Activated CD8-positive, alpha-beta memory T cell treated with anti-CD3 and anti-CD28 coated beads, Interleukin-2, amount 10 ng/mL, durations not matched to agents 7 days and 5 days (primary cell): ENCODE measurements at regions of chr11 and their contacts with region 1.

Region 1: DNA sequence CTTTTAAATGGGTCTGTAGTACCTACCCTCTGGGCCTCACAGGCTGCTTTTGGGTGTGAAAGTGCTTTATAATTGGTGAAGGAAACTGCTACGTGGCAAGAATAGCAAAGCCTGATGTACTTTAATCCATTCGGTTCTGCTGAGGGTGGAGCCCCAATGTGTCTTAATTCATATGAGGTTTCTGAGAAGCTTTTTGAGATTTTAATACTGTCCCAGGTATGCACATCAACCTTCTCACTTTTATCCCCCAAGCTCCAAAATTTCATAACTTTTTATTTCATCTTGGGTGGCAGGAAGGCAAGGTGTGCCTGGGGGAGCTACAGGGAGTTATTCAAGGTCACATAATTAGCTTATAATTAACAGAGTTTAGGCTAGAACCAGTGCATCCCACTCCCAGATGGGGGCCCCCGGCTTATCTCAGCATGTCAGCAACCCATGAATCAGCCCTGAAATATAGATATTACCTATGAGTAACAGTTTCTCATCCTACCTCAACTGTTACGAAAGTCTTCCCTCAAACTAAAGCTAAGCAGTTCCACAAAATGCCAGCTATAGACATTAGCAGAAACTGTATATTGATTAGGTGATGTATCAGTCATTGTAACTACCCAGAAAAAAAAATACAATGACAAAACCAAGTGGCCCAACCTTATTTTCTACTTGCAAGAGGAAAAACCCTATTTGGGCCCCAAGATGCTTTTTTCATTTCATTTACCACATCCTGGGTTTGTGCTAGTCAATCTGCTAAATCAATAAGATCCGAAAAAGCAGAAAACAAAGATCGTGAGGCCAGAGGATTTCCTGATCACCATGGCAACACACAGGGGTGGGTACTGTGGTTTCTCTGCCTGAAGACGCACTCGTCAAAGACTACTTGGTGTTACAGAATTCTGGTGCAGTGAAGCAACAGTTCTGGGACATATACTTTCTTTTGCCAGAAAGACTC is 26.7 kb downstream of the CD44 start:
- DNase-seq: peak; percentile 97
- ATAC-seq: peak; percentile 77
- H3K4me3 Mint-ChIP-seq: peak overlapping the region; percentile 44
- H3K27ac Mint-ChIP-seq: peak overlapping the region; percentile 99
- H3K4me1 Mint-ChIP-seq: peaks cover 95% of the 10 kb centered on the region
- H3K27me3 Mint-ChIP-seq: no peaks in the 10 kb centered on the region

Region 2: GRCh38 chr11:34830648-34831047 is 335.0 kb before region 1 on chr11:
- CTCF ChIA-PET with region 1: no interaction called
- DNase-seq: no peak
- ATAC-seq: no peak
- H3K4me3 Mint-ChIP-seq: no peak overlapping the region
- H3K27ac Mint-ChIP-seq: no peak overlapping the region
- H3K4me1 Mint-ChIP-seq: no peaks in the 10 kb centered on the region
- H3K27me3 Mint-ChIP-seq: peaks cover 14% of the 10 kb centered on the region

Region 3: GRCh38 chr11:34840736-34841386 is 324.8 kb before region 1 on chr11:
- CTCF ChIA-PET with region 1: no interaction called
- DNase-seq: no peak
- ATAC-seq: no peak
- H3K4me3 Mint-ChIP-seq: no peak overlapping the region
- H3K27ac Mint-ChIP-seq: no peak overlapping the region
- H3K4me1 Mint-ChIP-seq: no peaks in the 10 kb centered on the region
- H3K27me3 Mint-ChIP-seq: peaks cover 26% of the 10 kb centered on the region

Region 4: DNA sequence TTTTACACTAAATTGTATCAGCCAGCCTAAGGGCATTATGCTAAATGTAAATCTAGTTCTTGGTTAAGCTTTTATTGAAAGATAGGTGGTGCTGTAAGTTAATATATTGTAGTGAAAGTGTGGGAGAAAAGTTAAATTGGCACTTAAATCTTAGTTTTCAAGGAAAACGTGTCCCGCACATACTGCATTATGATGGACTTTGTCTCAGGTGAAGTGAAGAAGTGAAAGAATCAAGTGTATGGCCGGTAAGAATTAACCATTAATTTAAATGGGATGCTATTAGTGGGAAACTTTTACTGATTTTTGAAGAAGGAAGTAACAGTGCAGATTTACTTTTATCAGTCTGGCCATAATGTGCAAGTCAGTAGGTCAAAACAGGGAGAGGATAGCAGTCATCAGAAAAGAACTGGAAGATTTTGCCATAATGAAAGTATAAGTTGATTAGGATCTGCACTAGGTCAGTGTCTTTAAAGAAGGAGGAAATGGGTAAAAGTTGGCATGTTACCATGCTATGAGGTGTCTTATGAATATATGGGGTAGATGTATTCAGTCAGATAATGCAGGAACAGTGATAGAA is 167.7 kb before region 1 on chr11:
- CTCF ChIA-PET with region 1: interaction called, 15 read pairs
- DNase-seq: no peak
- ATAC-seq: peak; percentile 30
- H3K4me3 Mint-ChIP-seq: no peak overlapping the region
- H3K27ac Mint-ChIP-seq: no peak overlapping the region
- H3K4me1 Mint-ChIP-seq: peaks cover 17% of the 10 kb centered on the region
- H3K27me3 Mint-ChIP-seq: peaks cover 2% of the 10 kb centered on the region

Region 5: GRCh38 chr11:35145271-35145670 is 20.4 kb before region 1 on chr11:
- CTCF ChIA-PET with region 1: interaction called, 101 read pairs
- DNase-seq: peak; percentile 84
- ATAC-seq: peak; percentile 14
- H3K4me3 Mint-ChIP-seq: peak overlapping the region; percentile 68
- H3K27ac Mint-ChIP-seq: peak overlapping the region; percentile 92
- H3K4me1 Mint-ChIP-seq: peaks cover 86% of the 10 kb centered on the region
- H3K27me3 Mint-ChIP-seq: no peaks in the 10 kb centered on the region

Region 6: DNA sequence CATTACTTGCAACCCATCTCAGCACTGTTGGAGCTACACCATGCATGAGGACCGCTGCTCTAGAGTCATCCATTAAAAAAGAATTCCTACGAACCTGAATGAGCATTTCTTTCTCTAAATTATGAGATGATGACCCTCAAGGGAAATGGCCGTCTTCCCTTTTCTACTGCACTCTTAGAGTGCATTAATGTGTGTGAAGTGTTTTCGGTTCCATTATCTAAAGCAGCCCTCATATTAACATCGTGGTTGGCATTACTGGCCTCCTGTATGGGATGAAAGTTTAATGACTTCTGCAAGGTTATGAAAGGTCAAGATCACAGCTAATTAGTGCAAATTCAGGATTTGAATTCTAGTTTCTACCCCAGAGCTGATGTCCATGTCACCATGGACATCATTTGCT is 10.0 kb before region 1 on chr11:
- CTCF ChIA-PET with region 1: interaction called, 101 read pairs
- DNase-seq: no peak
- ATAC-seq: no peak
- H3K4me3 Mint-ChIP-seq: no peak overlapping the region
- H3K27ac Mint-ChIP-seq: no peak overlapping the region
- H3K4me1 Mint-ChIP-seq: peaks cover 92% of the 10 kb centered on the region
- H3K27me3 Mint-ChIP-seq: no peaks in the 10 kb centered on the region

Region 7: GRCh38 chr11:35343033-35343598 is 177.4 kb after region 1 on chr11:
- CTCF ChIA-PET with region 1: no interaction called
- DNase-seq: peak; percentile 50
- ATAC-seq: peak; percentile 79
- H3K4me3 Mint-ChIP-seq: no peak overlapping the region
- H3K27ac Mint-ChIP-seq: peak overlapping the region; percentile 51
- H3K4me1 Mint-ChIP-seq: peaks cover 26% of the 10 kb centered on the region
- H3K27me3 Mint-ChIP-seq: peaks cover 4% of the 10 kb centered on the region